MCF 10A (cell line): ENCODE measurements at regions of chr22 and their contacts with region 1.

Region 1: GRCh38 chr22:42621505-42622002 is 6.9 kb upstream of the POLDIP3 start:
- DNase-seq: peak; percentile 76
- H3K4me3 Mint-ChIP-seq: peak overlapping the region; percentile 50
- H3K27ac Mint-ChIP-seq: peak overlapping the region; percentile 93
- H3K4me1 Mint-ChIP-seq: peaks cover 22% of the 10 kb centered on the region
- H3K27me3 Mint-ChIP-seq: no peaks in the 10 kb centered on the region
- CTCF ChIP-seq: peak; percentile 87

Region 2: DNA sequence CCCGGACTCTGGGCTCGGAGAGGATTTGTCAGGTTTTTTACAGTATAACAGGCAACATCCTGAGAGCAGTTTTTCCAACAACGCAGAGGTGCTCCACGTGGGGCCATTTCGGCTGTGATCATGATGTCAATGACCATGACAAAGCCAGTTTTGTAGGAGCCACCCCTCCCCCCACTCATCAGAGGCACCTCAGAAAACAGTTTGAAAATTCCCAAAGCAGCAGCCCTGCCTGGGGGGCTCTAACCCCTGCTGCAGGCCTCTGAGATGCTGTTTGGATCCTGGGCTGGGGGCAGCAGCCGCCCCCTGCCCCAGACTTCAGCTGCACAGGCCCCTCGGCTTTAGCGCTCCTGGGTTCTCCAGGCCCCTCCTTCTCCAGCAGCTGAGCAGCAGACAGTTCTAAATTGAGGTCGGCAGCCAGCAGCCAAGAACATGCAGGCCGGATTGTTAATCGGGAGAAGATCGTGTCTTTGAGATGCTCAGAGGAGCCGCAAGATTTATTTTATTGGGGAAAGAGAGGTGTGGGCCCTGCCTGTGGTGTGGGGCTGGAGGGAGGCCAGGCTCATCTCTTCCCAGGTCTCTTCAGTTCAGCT is 208.7 kb before region 1 on chr22:
- CTCF ChIA-PET with region 1: no interaction called
- POLR2A ChIA-PET with region 1: no interaction called
- intact Hi-C with region 1: no loop called
- DNase-seq: no peak
- H3K4me3 Mint-ChIP-seq: no peak overlapping the region
- H3K27ac Mint-ChIP-seq: peak overlapping the region; percentile 21
- H3K4me1 Mint-ChIP-seq: no peaks in the 10 kb centered on the region
- H3K27me3 Mint-ChIP-seq: no peaks in the 10 kb centered on the region
- CTCF ChIP-seq: no peak

Region 3: GRCh38 chr22:42528258-42528948 is 93.2 kb before region 1 on chr22:
- CTCF ChIA-PET with region 1: no interaction called
- POLR2A ChIA-PET with region 1: no interaction called
- intact Hi-C with region 1: no loop called
- DNase-seq: no peak
- H3K4me3 Mint-ChIP-seq: no peak overlapping the region
- H3K27ac Mint-ChIP-seq: no peak overlapping the region
- H3K4me1 Mint-ChIP-seq: peaks cover 4% of the 10 kb centered on the region
- H3K27me3 Mint-ChIP-seq: peaks cover 15% of the 10 kb centered on the region
- CTCF ChIP-seq: no peak

Region 4: GRCh38 chr22:42649246-42650099 is 27.9 kb after region 1 on chr22 and contains the start of gene CYB5R3:
- CTCF ChIA-PET with region 1: interaction called, 3 read pairs
- POLR2A ChIA-PET with region 1: interaction called, 37 read pairs
- intact Hi-C with region 1: loop called (anchors 2 kb)
- DNase-seq: peak; percentile 79
- H3K4me3 Mint-ChIP-seq: peak within 1 kb of the TSS; percentile 100
- H3K27ac Mint-ChIP-seq: peak within 1 kb of the TSS; percentile 93
- H3K4me1 Mint-ChIP-seq: peaks cover 24% of the 10 kb centered on the region
- H3K27me3 Mint-ChIP-seq: no peaks in the 10 kb centered on the region
- CTCF ChIP-seq: no peak
- total RNA-seq, gene CYB5R3: 104 and 114 TPM in 2 replicates

Region 5: GRCh38 chr22:42820066-42820763 is 198.7 kb after region 1 on chr22:
- CTCF ChIA-PET with region 1: interaction called, 13 read pairs
- POLR2A ChIA-PET with region 1: interaction called, 5 read pairs
- intact Hi-C with region 1: loop called (anchors 1 kb)
- DNase-seq: peak; percentile 73
- H3K4me3 Mint-ChIP-seq: no peak overlapping the region
- H3K27ac Mint-ChIP-seq: peak overlapping the region; percentile 46
- H3K4me1 Mint-ChIP-seq: peaks cover 12% of the 10 kb centered on the region
- H3K27me3 Mint-ChIP-seq: no peaks in the 10 kb centered on the region
- CTCF ChIP-seq: peak; percentile 34